ENCODE measurements at regions of chr7 and their contacts with region 1.

Region 1: DNA sequence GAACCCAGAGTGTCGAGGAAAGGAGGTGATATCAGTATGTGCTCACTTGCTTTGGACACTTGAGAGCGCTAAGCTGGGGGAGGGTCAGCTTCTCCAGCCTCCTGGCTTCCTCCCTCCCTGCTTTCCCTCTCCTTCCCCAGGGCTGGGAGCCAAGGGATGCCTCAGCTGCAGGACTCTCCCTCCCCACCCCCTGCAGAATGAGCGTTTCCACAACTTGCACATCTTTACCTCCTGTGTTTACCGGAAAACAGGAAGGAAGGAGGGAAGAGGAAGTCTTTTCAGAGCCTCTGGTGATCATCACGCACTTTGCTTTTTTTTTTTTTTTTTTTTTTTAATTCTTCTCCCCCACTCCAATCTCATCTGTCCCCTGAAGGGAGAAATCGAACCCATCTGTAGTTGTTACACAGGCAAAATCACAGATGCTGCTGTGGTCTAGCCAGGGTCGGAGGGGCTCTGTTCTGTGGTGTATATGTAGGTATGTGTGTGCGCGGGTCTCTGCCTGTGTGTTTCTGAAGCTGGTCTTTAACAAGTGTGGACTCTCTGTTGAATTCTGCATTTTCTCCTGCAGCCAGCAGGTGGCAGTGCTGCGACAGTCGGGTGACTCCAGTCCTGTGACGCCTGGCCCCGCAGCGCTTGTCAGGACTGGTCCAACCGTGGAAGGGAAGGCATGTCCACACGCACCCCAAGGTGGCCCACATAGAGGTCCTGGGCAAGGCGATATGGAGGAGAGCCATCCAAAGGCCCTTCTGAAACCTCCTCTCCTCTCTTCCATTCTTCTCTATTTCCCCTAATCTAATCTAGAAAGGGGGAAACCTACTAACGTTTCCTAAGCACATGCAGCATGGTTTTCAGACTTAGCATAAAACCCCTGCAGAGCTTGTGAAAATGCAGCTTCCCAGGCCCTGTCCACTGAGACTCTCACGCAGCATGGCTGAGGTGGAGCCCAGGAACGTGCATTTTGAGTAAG is 257.6 kb downstream of the PLXNA4 start:
- DNase-seq: peak; percentile 66 to 92
- H3K4me3 ChIP-seq: peak overlapping the region in 1 of 4 experiments; percentile 34; a peak in 1 of 8 replicates
- H3K27ac ChIP-seq: no peak overlapping the region
- H3K4me1 ChIP-seq: peaks cover 0 to 7% (median 3%) of the 10 kb centered on the region in 4 experiments; a peak in 2 of 7 replicates
- H3K27me3 ChIP-seq: peaks cover 0 to 5% (median 0%) of the 10 kb centered on the region in 4 experiments; a peak in 2 of 7 replicates
- CTCF ChIP-seq: peak; percentile 78 to 90 (median 89)
- EP300 ChIP-seq: no peak
- POLR2A ChIP-seq: no peak
- RAD21 ChIP-seq: peak; percentile 90 to 92

Region 2: GRCh38 chr7:132218876-132219275 is 99.8 kb before region 1 on chr7:
- CTCF ChIA-PET with region 1: no interaction called
- POLR2A ChIA-PET with region 1: no interaction called
- DNase-seq: no peak
- H3K4me3 ChIP-seq: no peak overlapping the region
- H3K27ac ChIP-seq: no peak overlapping the region
- H3K4me1 ChIP-seq: peaks cover 0 to 5% (median 2%) of the 10 kb centered on the region in 4 experiments; a peak in 3 of 7 replicates
- H3K27me3 ChIP-seq: no peaks in the 10 kb centered on the region
- CTCF ChIP-seq: no peak
- EP300 ChIP-seq: no peak
- POLR2A ChIP-seq: no peak
- RAD21 ChIP-seq: no peak

Region 3: GRCh38 chr7:132307465-132307864 is 11.2 kb before region 1 on chr7:
- CTCF ChIA-PET with region 1: interaction called, 30 read pairs
- POLR2A ChIA-PET with region 1: no interaction called
- DNase-seq: peak in 1 of 2 experiments; percentile 51
- H3K4me3 ChIP-seq: no peak overlapping the region
- H3K27ac ChIP-seq: no peak overlapping the region
- H3K4me1 ChIP-seq: no peaks in the 10 kb centered on the region
- H3K27me3 ChIP-seq: no peaks in the 10 kb centered on the region
- CTCF ChIP-seq: peak; percentile 39 to 68 (median 63)
- EP300 ChIP-seq: no peak
- POLR2A ChIP-seq: no peak
- RAD21 ChIP-seq: peak; percentile 54 to 64

Region 4: GRCh38 chr7:132328760-132329159 is 10.1 kb after region 1 on chr7:
- CTCF ChIA-PET with region 1: interaction called, 14 read pairs
- POLR2A ChIA-PET with region 1: no interaction called
- DNase-seq: no peak
- H3K4me3 ChIP-seq: no peak overlapping the region
- H3K27ac ChIP-seq: no peak overlapping the region
- H3K4me1 ChIP-seq: no peaks in the 10 kb centered on the region
- H3K27me3 ChIP-seq: no peaks in the 10 kb centered on the region
- CTCF ChIP-seq: no peak
- EP300 ChIP-seq: 0 out of 3 replicates have a peak, but pooled peaks of 1 of the 2 experiments have one; percentile 29
- POLR2A ChIP-seq: no peak
- RAD21 ChIP-seq: no peak

Region 5: DNA sequence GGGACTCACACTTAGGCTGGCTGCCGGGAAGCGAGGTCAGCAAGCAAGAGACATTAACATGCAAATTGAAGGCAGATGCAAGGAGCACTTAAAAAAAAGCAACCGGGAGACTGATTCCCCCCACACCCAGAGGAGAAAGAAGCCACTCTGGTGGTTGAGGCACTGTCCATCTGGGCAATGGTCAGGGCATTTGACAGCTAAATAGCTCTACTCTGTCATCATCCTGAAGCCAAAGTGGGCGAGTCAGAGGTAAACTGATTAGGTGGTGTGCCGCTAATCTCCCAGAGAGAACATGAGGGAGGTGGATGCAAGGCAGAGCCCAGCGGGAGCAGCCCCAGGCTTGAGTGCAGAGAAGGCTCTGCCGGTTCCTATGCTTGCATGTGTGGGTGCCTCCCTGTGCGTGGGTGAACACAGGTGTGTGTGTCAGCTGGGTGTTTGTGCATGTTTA is 157.1 kb after region 1 on chr7:
- CTCF ChIA-PET with region 1: interaction called, 10 read pairs
- POLR2A ChIA-PET with region 1: no interaction called
- DNase-seq: peak in 1 of 2 experiments; percentile 54
- H3K4me3 ChIP-seq: peak overlapping the region in 1 of 4 experiments; percentile 39; a peak in 2 of 8 replicates
- H3K27ac ChIP-seq: no peak overlapping the region
- H3K4me1 ChIP-seq: peaks cover 6 to 21% (median 7%) of the 10 kb centered on the region in 4 experiments
- H3K27me3 ChIP-seq: no peaks in the 10 kb centered on the region
- CTCF ChIP-seq: no peak
- EP300 ChIP-seq: no peak
- POLR2A ChIP-seq: no peak
- RAD21 ChIP-seq: no peak

Region 6: DNA sequence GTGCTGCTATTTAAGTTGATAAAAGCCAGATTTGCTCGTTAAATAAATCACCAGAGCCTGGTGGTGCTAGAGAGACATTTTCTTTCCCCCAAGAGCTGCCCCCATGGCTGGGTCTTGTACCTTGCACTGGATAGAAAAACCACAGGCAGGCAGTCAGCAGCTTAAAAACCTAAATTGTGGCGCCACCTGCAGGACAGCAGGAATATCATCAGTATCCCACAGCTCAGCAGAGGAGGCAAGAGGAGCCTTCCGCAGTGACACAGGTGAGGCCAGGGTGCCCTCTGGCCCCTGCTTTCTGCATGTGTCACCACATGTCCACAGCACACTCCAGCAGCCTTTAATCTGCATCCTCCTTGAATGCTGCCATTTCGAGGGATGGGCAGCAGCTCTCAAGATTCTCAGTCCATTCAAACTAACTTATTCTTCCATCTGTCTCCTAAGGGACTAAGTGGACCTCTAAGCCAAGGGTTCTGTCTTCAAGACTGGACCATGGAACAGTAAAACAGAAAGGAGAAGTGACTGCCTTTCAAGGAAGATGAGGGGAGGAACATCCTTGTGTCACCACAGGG is 262.2 kb after region 1 on chr7:
- CTCF ChIA-PET with region 1: interaction called, 14 read pairs
- POLR2A ChIA-PET with region 1: no interaction called
- DNase-seq: peak in 1 of 2 experiments; percentile 86
- H3K4me3 ChIP-seq: no peak overlapping the region
- H3K27ac ChIP-seq: no peak overlapping the region
- H3K4me1 ChIP-seq: peaks cover 0 to 9% (median 6%) of the 10 kb centered on the region in 4 experiments; a peak in 5 of 7 replicates
- H3K27me3 ChIP-seq: peaks cover 26 to 34% (median 29%) of the 10 kb centered on the region in 4 experiments
- CTCF ChIP-seq: peak; percentile 78 to 90 (median 86)
- EP300 ChIP-seq: no peak
- POLR2A ChIP-seq: no peak
- RAD21 ChIP-seq: peak; percentile 90 to 95

Measured in H1 (cell line).